ENCODE measurements at regions of chr12 and their contacts with region 1.

Region 1: DNA sequence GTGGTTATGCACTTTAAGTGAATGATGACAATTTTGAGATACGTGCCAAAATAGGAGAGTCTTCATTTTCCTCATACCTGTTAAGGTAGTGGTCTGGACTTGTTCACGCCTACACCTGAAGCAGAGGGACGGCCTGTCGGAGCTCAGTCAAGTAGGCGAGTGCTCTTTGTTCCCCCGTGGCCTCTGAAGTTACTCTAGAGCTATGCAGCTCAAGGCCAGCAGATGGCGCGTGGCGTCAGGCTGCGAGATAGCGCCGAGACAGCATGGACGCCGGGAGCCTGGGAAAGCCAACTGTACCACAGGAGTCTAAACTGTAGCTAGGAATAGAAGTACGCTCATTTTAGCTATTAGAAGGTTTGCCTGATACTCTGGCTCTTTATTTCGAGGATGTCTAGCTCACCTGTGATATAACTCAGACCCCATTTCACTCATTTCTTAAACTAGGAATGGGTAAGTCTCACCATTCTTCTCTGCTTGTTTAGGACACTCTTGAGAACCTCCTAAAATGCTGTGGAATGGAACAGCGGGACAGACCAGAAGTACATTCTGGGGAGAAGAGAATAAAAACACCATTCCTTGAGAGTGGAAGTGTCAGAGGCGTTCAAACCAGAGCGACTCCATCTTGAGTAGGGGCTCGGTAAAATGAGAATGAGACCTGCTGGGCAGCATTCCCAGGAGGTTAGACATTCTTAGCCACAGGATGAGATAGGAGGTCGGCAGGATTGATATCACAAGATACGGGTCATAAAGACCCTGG is 267.4 kb upstream of the HMGA2 start:
- DNase-seq: peak; percentile 78 to 92 (median 88)
- ATAC-seq: peak; percentile 96 to 98
- H3K4me3 ChIP-seq: no peak overlapping the region
- H3K27ac ChIP-seq: no peak overlapping the region
- H3K4me1 ChIP-seq: peaks cover 2% of the 10 kb centered on the region
- H3K27me3 ChIP-seq: no peaks in the 10 kb centered on the region

Region 2: DNA sequence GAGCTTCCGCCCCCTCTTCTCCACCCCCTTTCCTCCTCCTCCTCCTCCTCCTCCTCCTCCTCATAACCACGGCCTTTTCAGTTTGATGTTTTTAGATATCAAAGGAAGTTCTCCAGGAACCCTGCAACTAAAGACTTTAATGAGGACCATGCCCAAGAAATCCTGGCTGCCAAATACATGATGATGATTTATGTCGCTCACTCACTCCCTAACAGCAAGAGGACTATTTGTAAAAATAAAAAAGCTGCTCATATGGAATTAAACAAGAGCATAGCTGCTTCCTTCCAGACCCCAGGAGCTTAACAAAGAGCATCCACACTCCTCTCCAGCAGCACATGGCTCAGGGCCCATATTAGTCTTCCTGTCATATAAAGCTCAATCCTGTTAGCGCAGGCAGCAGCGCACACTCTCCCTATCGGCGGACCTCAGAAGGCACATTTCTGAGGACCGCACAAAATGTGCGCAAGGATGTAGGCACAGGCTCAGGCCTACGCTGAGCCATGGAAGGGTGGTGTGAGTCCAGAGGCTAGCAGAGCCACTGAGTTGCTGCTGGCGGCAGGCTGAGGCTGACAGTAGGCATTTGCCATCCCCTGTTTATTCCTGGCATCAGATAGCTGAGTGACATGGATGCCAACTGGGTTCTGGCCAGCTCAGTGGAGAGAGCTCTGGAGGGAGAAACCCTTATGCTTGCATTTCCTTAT is 45.6 kb before region 1 on chr12:
- intact Hi-C with region 1: no loop called
- DNase-seq: peak; percentile 46 to 75 (median 71)
- ATAC-seq: peak; percentile 47 to 77
- H3K4me3 ChIP-seq: no peak overlapping the region
- H3K27ac ChIP-seq: no peak overlapping the region
- H3K4me1 ChIP-seq: peaks cover 8% of the 10 kb centered on the region
- H3K27me3 ChIP-seq: no peaks in the 10 kb centered on the region

Region 3: DNA sequence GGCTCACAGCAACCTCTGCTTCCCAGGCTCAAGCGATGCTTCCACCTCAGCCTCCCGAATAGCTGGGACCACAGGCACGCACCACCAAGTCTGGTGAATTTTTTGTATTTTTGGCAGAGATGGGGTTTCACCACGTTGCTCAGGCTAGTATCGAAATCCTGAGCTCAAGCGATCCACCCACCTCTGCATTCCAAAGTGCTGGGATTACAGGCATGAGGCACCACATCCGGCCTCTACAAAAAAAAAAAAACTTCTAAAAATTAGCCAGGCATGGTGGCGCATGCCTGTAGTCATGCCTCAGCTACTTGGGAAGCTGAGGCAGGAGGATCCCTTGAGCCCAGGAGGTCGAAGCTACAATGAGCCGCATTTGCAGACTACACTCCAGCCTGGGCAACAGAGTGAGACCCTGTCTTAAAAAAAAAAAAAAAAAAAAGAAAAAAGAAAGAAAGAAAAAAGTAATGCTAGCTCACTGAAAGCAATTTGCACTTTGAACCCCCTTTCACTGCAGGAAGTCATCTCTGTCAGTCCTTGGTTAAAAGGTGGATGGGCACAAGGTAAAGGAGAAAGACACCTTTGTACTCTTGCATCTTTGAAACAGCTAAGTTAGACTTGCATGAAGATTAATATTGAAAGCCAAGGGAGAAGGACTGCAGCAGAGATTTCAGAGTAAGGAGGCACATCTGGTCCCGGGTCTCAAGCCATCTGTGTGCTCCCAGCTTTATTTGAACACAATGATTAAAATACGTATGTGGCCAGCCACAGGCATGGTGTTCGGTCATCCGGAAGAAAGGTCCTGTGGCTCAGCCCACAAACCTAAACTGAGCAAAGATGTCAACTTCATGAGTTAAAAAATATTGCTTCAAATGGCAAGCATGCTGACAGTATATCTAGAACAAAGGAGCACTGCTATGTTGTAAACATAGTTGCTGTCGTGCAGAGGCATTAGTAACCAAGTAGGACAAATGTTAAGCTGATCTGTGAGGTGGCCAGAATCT is 163.6 kb after region 1 on chr12:
- intact Hi-C with region 1: no loop called
- DNase-seq: no peak
- ATAC-seq: no peak
- H3K4me3 ChIP-seq: no peak overlapping the region
- H3K27ac ChIP-seq: no peak overlapping the region
- H3K4me1 ChIP-seq: no peaks in the 10 kb centered on the region
- H3K27me3 ChIP-seq: no peaks in the 10 kb centered on the region

Region 4: GRCh38 chr12:65871865-65872655 is 315.2 kb after region 1 on chr12:
- intact Hi-C with region 1: loop called in 1 of 4 experiments (anchors 5 kb)
- DNase-seq: no peak
- ATAC-seq: no peak
- H3K4me3 ChIP-seq: no peak overlapping the region
- H3K27ac ChIP-seq: no peak overlapping the region
- H3K4me1 ChIP-seq: no peaks in the 10 kb centered on the region
- H3K27me3 ChIP-seq: no peaks in the 10 kb centered on the region

Region 5: GRCh38 chr12:66087365-66087943 is 530.6 kb after region 1 on chr12:
- intact Hi-C with region 1: loop called in 3 of 4 experiments (anchors 5 to 10 kb)
- DNase-seq: peak; percentile 54 to 79 (median 65)
- ATAC-seq: peak; percentile 54 to 61
- H3K4me3 ChIP-seq: no peak overlapping the region
- H3K27ac ChIP-seq: no peak overlapping the region
- H3K4me1 ChIP-seq: no peaks in the 10 kb centered on the region
- H3K27me3 ChIP-seq: no peaks in the 10 kb centered on the region

Measured in right cardiac atrium (tissue), 5 donors.